SK-N-SH (cell line): ENCODE measurements at regions of chr17 and their contacts with region 1.

Region 1: DNA sequence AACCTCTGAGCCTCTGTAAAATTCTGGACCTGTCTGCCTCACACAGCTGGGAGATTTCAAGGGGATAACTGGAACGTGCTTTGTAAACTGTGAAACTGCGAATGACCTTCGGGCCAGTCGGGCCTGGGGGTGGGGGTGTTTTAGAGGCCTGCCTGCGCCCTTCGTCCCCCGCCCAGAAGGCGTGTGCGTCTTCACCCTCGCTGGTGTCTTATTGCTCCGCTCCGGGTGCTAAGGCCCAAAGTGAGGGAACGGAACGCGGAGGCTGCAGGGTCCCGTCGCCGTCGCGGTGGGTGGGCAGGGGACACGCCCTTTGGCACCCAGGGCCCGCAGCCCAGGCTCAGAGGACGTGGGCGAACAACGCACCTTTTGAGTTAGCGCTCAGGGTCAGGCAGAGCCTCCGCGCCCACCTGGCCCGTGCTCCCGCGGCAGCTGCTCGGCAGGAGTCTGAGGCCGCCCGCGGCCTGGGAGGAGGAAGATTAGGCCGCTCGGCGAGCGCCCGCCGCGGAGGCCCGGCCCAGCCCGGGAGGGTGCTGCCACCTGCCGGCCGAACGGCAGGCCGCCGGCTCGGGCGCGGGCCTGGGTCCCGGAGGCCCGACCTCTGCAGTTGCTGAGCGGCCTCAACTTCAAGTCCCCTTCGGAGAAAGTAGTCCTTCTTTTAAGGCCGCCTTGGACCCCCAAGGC is 29.7 kb downstream of the DCAKD start:
- DNase-seq: peak; percentile 96
- H3K4me3 ChIP-seq: peak overlapping the region in 1 of 2 experiments; percentile 19; a peak in 1 of 4 replicates
- H3K27ac ChIP-seq: peak overlapping the region in 1 of 2 experiments; percentile 77; a peak in 2 of 4 replicates
- H3K4me1 ChIP-seq: peaks cover 10 to 34% of the 10 kb centered on the region in 2 experiments; a peak in 1 of 4 replicates
- H3K27me3 ChIP-seq: no peaks in the 10 kb centered on the region
- CTCF ChIP-seq: peak; percentile 88
- EP300 ChIP-seq: no peak
- RAD21 ChIP-seq: peak; percentile 77

Region 2: GRCh38 chr17:44672479-44673093 is 349.2 kb before region 1 on chr17:
- CTCF ChIA-PET with region 1: no interaction called
- POLR2A ChIA-PET with region 1: no interaction called
- DNase-seq: peak; percentile 34
- H3K4me3 ChIP-seq: no peak overlapping the region
- H3K27ac ChIP-seq: no peak overlapping the region
- H3K4me1 ChIP-seq: 0 out of 4 replicates have a peak, but pooled peaks cover 0 to 3% of the 10 kb centered on the region in 2 experiments
- H3K27me3 ChIP-seq: no peaks in the 10 kb centered on the region
- CTCF ChIP-seq: peak; percentile 76
- EP300 ChIP-seq: no peak
- RAD21 ChIP-seq: peak; percentile 57

Region 3: GRCh38 chr17:44899069-44899782 is 122.5 kb before region 1 on chr17 and contains the start of gene EFTUD2:
- CTCF ChIA-PET with region 1: interaction called, 38 read pairs
- POLR2A ChIA-PET with region 1: interaction called, 4 read pairs
- DNase-seq: peak; percentile 96
- H3K4me3 ChIP-seq: peak within 1 kb of the TSS; percentile 92 to 97
- H3K27ac ChIP-seq: peak within 1 kb of the TSS; percentile 94 to 99
- H3K4me1 ChIP-seq: peaks cover 6 to 23% of the 10 kb centered on the region in 2 experiments; a peak in 3 of 4 replicates
- H3K27me3 ChIP-seq: no peaks in the 10 kb centered on the region
- CTCF ChIP-seq: no peak
- EP300 ChIP-seq: no peak; a peak in 1 of 4 replicates
- RAD21 ChIP-seq: no peak
- polyA plus RNA-seq, gene EFTUD2: 79.9 and 82.9 TPM in 2 replicates

Region 4: DNA sequence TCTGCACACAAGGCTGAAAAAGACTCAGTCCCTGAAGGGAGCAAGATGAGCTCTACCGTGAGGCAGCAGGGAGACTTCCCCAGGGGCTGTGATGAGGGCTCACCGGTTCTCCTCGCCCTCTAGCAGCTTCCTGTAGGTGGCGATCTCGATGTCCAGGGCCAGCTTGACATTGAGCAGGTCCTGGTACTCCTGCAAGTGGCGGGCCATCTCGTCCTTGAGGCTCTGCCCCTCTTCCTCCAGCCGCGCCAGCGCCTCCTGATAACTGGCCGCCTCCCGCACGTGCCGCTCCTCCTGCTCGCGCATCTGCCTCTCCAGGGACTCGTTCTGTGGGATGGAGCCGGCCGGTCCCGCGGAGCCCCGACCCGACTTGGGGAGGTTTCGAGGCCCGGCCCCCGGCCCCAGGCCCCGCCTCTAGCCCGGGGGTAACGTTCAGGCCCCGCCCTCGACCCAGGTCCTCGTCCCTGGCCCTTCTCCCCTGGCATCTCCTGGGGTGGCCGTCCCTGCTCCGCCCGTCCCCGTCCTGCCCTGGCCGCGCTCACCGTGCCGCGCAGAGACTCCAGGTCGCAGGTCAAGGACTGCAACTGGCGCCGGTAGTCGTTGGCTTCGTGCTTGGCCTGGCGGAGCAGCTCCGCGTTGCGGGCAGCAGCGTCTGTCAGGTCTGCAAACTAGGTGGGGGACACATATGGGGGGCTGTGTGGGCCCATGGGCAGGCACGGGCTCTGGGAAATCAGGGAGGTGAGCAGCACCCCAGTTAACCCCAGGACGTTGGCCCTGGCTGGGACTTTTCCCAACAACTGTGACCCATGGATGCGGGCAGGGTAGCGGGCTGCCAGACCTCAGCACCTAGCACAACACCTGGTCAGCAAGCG is 110.4 kb before region 1 on chr17:
- CTCF ChIA-PET with region 1: interaction called, 79 read pairs
- POLR2A ChIA-PET with region 1: no interaction called
- DNase-seq: peak; percentile 77
- H3K4me3 ChIP-seq: no peak overlapping the region
- H3K27ac ChIP-seq: peak overlapping the region in 1 of 2 experiments; percentile 93; a peak in 1 of 4 replicates
- H3K4me1 ChIP-seq: peaks cover 6 to 25% of the 10 kb centered on the region in 2 experiments; a peak in 3 of 4 replicates
- H3K27me3 ChIP-seq: no peaks in the 10 kb centered on the region
- CTCF ChIP-seq: peak; percentile 50
- EP300 ChIP-seq: no peak
- RAD21 ChIP-seq: 0 out of 2 replicates have a peak, but pooled peaks have one; percentile 30

Region 5: GRCh38 chr17:44968226-44969143 is 53.3 kb before region 1 on chr17 and contains the start of gene C1QL1:
- CTCF ChIA-PET with region 1: interaction called, 33 read pairs
- POLR2A ChIA-PET with region 1: no interaction called
- DNase-seq: peak; percentile 100
- H3K4me3 ChIP-seq: peak within 1 kb of the TSS; percentile 36 to 57
- H3K27ac ChIP-seq: no peak within 1 kb of the TSS
- H3K4me1 ChIP-seq: peaks cover 0 to 25% of the 10 kb centered on the region in 2 experiments; a peak in 1 of 4 replicates
- H3K27me3 ChIP-seq: peaks cover 8% of the 10 kb centered on the region; the same call in 1 of the 2 replicates
- CTCF ChIP-seq: peak; percentile 14; the same call in 1 of the 2 replicates
- EP300 ChIP-seq: no peak
- RAD21 ChIP-seq: no peak
- polyA plus RNA-seq, gene C1QL1: 5.4 and 11.9 TPM in 2 replicates

Region 6: DNA sequence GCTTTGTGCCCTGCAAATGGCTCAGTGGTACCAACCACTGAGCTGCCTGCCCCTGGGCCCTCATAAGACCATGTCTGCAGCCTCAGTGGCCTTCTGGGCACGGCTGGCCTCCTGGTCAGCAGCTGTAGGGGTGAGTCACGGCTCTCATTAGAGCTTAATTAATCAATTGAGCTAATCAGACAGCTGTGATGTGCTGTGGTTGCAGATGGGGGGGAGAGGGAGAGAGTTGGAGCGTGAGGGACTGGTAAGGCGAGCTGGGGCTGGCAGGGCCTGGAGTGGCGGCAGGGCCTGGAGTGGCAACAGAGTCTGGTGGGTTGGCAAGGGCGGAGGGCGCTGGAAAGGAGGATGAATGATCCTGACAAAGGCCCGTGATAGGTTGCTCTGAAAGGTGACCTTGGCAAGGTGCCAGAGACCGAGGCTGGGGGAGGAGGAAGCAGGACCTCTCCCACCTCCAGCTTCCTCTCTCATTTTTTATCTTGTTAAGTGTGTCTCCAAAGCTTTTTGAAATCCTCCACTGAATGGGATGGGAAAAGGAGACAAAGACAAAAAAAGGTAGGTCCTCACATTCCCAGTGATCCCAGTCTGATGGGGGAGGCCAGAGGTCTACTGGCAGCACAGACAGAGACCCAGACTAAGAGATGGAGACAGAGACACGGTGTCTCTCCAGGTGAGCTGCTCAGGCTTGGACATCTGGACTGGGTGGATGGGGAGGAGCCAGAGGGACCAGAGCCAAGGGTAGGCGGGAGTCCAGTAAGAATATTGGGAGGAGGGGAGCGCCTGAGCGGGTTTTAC is 11.9 kb before region 1 on chr17:
- CTCF ChIA-PET with region 1: interaction called, 14 read pairs
- POLR2A ChIA-PET with region 1: no interaction called
- DNase-seq: no peak
- H3K4me3 ChIP-seq: no peak overlapping the region
- H3K27ac ChIP-seq: no peak overlapping the region
- H3K4me1 ChIP-seq: peaks cover 0 to 10% of the 10 kb centered on the region in 2 experiments; a peak in 1 of 4 replicates
- H3K27me3 ChIP-seq: no peaks in the 10 kb centered on the region
- CTCF ChIP-seq: no peak
- EP300 ChIP-seq: no peak
- RAD21 ChIP-seq: no peak

Region 7: GRCh38 chr17:45302649-45303173 is 281.0 kb after region 1 on chr17:
- CTCF ChIA-PET with region 1: no interaction called
- POLR2A ChIA-PET with region 1: no interaction called
- DNase-seq: no peak
- H3K4me3 ChIP-seq: no peak overlapping the region
- H3K27ac ChIP-seq: peak overlapping the region; percentile 23 to 98; a peak in 3 of 4 replicates
- H3K4me1 ChIP-seq: peaks cover 24 to 37% of the 10 kb centered on the region in 2 experiments; a peak in 3 of 4 replicates
- H3K27me3 ChIP-seq: no peaks in the 10 kb centered on the region
- CTCF ChIP-seq: no peak
- EP300 ChIP-seq: peak in 1 of 2 experiments; percentile 8; a peak in 1 of 4 replicates
- RAD21 ChIP-seq: no peak